Cardiac septum (tissue), 1 donor: ENCODE measurements at regions of chr2 and their contacts with region 1.

Region 1: DNA sequence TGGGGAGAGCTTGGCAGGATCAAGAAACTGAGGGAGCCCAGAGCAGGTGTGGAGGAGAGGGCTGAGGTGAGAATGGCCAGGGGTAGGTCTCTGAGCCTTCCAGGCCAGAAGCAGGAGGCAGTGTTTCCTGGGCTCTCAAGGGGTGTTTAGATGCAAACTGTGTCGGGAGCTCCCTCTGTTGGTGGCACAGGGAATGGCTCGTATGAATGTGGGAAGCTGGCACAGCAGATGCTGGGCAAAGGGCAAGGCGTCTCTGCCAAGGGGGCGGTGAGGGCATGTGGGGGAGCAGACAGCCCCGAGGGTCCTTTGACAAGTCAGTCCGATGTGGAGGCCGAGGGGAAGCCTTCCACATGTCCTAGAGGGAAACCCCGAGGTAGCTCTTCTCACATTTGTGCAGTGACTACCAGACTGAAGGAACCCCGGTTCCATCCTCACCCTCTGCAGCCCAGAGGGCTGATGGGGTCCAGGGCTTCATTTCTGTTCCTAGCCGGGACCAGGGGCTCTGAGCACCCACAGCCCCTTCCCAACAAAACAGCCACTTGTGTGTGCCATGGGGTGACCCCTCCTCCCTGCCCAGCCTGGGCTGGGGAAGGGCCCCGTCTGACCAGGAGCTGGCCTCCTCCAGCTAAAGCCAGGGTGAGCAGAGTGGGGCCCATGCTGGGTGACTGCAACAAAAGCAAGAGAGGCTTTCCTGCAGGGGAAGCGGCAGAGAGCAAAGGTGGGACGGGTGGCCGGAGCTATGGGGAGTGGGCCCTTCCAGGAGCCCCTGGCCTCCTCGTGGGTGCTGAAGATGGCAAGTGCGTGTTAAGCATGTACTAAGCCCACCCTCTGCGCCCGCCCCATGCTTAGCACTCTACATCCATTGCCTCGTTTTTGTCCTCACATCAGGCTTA is 103.4 kb downstream of the SEPTIN10 start:
- DNase-seq: peak; percentile 83

Region 2: GRCh38 chr2:108855194-108855593 is 655.2 kb before region 1 on chr2:
- intact Hi-C with region 1: loop called (anchors 10 kb)
- DNase-seq: no peak

Region 3: DNA sequence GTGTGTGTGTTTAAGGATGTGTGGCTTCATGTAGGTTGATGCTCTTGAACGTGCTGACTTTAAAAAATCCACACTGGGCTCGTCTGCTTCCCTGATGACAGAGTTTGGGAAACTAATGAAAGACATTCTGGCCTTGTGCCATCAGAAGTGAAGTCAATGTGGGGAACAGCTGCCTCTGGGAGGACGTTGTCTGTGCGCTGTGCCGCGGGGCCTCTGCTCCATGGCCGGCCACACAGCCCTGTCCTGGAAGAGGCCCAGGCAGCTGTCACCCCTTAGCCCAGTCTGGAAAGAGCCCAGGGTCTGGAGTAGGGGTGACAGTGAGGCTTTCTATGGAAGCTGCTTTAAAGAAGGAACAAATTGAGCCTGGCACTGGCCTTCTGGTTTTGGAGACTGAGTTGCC is 225.6 kb before region 1 on chr2:
- intact Hi-C with region 1: loop called (anchors 5 kb)
- DNase-seq: no peak